Ovary (tissue), 10 donors: ENCODE measurements at regions of chr7 and their contacts with region 1.

Region 1: GRCh38 chr7:106659963-106660861 is 746 bp downstream of the CCDC71L start:
- DNase-seq: peak; percentile 62 to 84 (median 69)
- H3K4me3 ChIP-seq: peak overlapping the region; percentile 82
- H3K27ac ChIP-seq: peak overlapping the region; percentile 72 to 94
- H3K4me1 ChIP-seq: peaks cover 2% of the 10 kb centered on the region
- H3K27me3 ChIP-seq: no peaks in the 10 kb centered on the region
- CTCF ChIP-seq: peak; percentile 36 to 45 (median 38)
- EP300 ChIP-seq: no peak
- POLR2A ChIP-seq: no peak

Region 2: GRCh38 chr7:105164751-105165150 is 1495.5 kb before region 1 on chr7:
- intact Hi-C with region 1: no loop called
- DNase-seq: no peak
- H3K4me3 ChIP-seq: no peak overlapping the region
- H3K27ac ChIP-seq: no peak overlapping the region
- H3K4me1 ChIP-seq: no peaks in the 10 kb centered on the region
- H3K27me3 ChIP-seq: no peaks in the 10 kb centered on the region
- CTCF ChIP-seq: no peak
- EP300 ChIP-seq: no peak
- POLR2A ChIP-seq: no peak

Region 3: DNA sequence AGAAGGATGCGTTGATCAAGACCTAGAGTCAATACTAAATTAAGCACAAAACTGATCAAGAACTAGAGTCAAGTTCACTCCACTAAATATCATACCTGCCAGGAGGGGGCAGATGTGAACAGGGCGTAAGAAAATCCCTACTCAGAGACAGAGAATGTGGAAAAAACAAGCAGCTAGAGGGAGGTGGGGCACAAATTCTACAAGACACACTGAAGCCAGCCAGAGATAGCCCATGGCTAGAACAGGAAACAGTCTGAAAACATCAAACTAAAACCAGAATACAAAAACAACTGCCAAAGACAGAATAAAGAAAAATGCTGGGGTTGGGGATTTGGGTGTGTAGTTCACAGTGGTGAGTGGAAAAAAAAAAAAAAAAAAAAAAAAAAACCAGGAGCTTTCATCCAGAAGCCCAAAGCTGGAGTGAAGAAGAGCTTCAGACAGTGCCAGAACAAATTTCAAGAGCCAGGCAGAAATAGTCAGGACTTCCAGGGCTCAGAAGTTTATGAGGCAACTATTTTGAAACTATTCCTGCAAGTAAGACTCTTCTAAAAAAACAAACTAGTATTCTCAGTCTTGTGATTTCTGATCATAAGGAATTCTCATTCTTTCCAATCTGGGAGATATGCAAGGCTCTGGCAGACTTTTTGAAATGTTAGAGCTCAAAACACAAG is 117.5 kb before region 1 on chr7:
- intact Hi-C with region 1: loop called in 1 of 4 experiments (anchors 10 kb)
- DNase-seq: peak in 4 of 5 donors; percentile 21 to 66 (median 43)
- H3K4me3 ChIP-seq: no peak overlapping the region
- H3K27ac ChIP-seq: peak overlapping the region; percentile 2 to 30
- H3K4me1 ChIP-seq: peaks cover 2% of the 10 kb centered on the region
- H3K27me3 ChIP-seq: no peaks in the 10 kb centered on the region
- CTCF ChIP-seq: peak in 2 of 3 donors; percentile 40 to 50
- EP300 ChIP-seq: no peak
- POLR2A ChIP-seq: no peak

Region 4: GRCh38 chr7:107044347-107045194 is 384.4 kb after region 1 on chr7 and contains the start of gene PRKAR2B:
- intact Hi-C with region 1: loop called in 1 of 4 experiments (anchors 10 kb)
- DNase-seq: peak; percentile 90 to 94 (median 93)
- H3K4me3 ChIP-seq: peak within 1 kb of the TSS; percentile 90
- H3K27ac ChIP-seq: peak within 1 kb of the TSS; percentile 41 to 85
- H3K4me1 ChIP-seq: no peaks in the 10 kb centered on the region
- H3K27me3 ChIP-seq: no peaks in the 10 kb centered on the region
- CTCF ChIP-seq: peak in 2 of 3 donors; percentile 34 to 38
- EP300 ChIP-seq: no peak
- POLR2A ChIP-seq: peak; percentile 49
- total RNA-seq, gene PRKAR2B: 31.7 to 58.4 (median 43.7) TPM